ENCODE measurements at regions of chr14 and their contacts with region 1.

Region 1: GRCh38 chr14:24108336-24108874 is 6.2 kb upstream of the DCAF11 start:
- DNase-seq: no peak
- ATAC-seq: peak; percentile 31
- H3K4me3 Mint-ChIP-seq: peak overlapping the region; percentile 60
- H3K27ac Mint-ChIP-seq: peak overlapping the region; percentile 99
- H3K4me1 Mint-ChIP-seq: peaks cover 20% of the 10 kb centered on the region
- H3K27me3 Mint-ChIP-seq: no peaks in the 10 kb centered on the region
- CTCF ChIP-seq: no peak

Region 2: GRCh38 chr14:24058260-24058950 is 50.0 kb before region 1 on chr14:
- CTCF ChIA-PET with region 1: interaction called, 199 read pairs
- POLR2A ChIA-PET with region 1: interaction called, 18 read pairs
- intact Hi-C with region 1: loop called (anchors 2 kb)
- DNase-seq: peak; percentile 85
- ATAC-seq: peak; percentile 80
- H3K4me3 Mint-ChIP-seq: no peak overlapping the region
- H3K27ac Mint-ChIP-seq: peak overlapping the region; percentile 85
- H3K4me1 Mint-ChIP-seq: peaks cover 6% of the 10 kb centered on the region
- H3K27me3 Mint-ChIP-seq: no peaks in the 10 kb centered on the region
- CTCF ChIP-seq: peak; percentile 95

Region 3: DNA sequence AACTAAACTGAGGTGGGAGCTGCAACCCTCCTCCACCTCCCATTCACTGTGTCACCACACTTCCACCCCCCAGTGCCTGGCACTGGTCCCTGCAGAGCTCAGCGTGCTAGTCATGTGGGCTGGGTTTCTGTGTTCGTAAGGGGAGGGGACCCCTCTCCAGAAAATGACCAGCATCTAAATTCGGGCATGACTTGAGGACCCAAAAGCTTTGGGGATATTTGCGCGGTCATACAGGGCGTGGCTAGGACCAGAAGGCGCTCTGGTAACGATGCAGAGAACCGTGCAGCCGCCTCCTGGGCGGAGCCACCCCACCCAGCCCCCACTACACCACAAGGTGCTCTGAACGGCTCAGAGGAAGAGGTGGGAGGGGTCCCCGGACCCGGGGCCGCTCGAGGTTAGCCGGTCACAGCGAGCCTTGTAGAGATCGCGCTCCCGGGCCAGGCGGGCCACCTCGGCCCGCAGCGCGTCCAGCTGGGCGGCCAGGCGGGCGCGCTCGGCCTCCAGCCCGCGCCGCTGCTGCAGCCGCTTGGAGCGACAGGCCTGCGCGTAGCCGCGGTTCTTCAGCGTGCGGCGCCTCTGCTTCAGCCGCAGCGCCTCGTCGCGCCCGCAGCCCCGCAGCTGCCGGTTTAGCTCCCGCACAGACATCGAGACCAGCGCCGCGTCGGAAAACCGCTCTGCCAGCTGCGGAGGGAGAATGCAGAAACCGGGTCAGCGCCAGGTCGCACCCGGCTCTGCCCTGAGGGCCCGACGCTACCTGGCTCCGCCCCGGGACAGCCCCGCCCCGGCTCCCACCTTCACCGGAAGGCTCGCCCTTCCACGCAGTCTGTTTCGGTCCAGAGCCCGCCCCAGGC is 27.3 kb before region 1 on chr14:
- CTCF ChIA-PET with region 1: interaction called, 34 read pairs
- POLR2A ChIA-PET with region 1: interaction called, 19 read pairs
- intact Hi-C with region 1: no loop called
- DNase-seq: peak; percentile 89
- ATAC-seq: peak; percentile 93
- H3K4me3 Mint-ChIP-seq: peak overlapping the region; percentile 75
- H3K27ac Mint-ChIP-seq: peak overlapping the region; percentile 75
- H3K4me1 Mint-ChIP-seq: peaks cover 19% of the 10 kb centered on the region
- H3K27me3 Mint-ChIP-seq: no peaks in the 10 kb centered on the region
- CTCF ChIP-seq: no peak

Region 4: DNA sequence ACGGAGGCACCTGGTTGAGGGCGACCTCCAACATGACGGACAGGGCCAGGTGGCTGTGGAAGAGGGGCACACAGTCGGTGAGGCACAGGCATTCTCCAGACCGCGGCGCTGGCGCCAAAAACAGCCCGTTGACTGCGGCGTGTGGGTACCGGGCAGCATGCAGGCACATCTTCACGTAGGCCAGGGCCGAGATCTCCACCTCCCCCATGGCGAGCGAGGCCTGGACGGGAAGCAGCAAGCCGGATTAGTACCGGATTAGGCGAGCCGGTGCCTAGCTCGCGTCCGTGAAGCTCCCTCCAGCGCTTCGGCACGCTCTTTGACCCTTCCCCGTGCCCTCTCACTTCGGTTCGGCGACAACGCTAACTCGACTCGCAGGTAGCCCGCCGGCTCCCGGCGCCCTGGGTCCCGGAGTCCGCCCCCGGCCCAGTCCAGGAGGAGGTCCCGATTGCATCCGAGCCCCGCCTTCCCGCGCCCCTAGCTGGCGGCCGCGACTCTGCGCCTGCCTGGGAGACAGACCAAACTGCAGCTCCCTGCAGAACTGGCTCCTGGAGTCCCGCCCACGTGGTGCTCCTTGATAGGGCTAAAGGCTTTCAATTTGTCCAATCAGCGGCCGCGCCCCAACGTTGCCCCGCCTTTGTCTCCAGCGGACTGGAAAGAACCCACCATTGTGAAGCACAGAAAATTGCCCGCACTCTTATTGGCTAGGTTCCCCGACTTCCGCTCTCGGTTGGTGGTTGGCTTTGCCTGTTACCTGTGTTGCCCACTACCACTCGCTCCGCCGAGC is 32.9 kb after region 1 on chr14 and contains the start of gene EMC9:
- CTCF ChIA-PET with region 1: interaction called, 22 read pairs
- POLR2A ChIA-PET with region 1: interaction called, 62 read pairs
- intact Hi-C with region 1: no loop called
- DNase-seq: peak; percentile 100
- ATAC-seq: peak; percentile 87
- H3K4me3 Mint-ChIP-seq: peak within 1 kb of the TSS; percentile 97
- H3K27ac Mint-ChIP-seq: peak within 1 kb of the TSS; percentile 97
- H3K4me1 Mint-ChIP-seq: peaks cover 68% of the 10 kb centered on the region
- H3K27me3 Mint-ChIP-seq: no peaks in the 10 kb centered on the region
- CTCF ChIP-seq: peak; percentile 39
- total RNA-seq, gene EMC9: 39.0 to 39.9 TPM